Activated CD4-positive, alpha-beta memory T cell treated with anti-CD3 and anti-CD28 coated beads, Interleukin-2, amount 10 ng/mL, durations not matched to agents 7 days and 5 days (primary cell): ENCODE measurements at regions of chr19 and their contacts with region 1.

Region 1: DNA sequence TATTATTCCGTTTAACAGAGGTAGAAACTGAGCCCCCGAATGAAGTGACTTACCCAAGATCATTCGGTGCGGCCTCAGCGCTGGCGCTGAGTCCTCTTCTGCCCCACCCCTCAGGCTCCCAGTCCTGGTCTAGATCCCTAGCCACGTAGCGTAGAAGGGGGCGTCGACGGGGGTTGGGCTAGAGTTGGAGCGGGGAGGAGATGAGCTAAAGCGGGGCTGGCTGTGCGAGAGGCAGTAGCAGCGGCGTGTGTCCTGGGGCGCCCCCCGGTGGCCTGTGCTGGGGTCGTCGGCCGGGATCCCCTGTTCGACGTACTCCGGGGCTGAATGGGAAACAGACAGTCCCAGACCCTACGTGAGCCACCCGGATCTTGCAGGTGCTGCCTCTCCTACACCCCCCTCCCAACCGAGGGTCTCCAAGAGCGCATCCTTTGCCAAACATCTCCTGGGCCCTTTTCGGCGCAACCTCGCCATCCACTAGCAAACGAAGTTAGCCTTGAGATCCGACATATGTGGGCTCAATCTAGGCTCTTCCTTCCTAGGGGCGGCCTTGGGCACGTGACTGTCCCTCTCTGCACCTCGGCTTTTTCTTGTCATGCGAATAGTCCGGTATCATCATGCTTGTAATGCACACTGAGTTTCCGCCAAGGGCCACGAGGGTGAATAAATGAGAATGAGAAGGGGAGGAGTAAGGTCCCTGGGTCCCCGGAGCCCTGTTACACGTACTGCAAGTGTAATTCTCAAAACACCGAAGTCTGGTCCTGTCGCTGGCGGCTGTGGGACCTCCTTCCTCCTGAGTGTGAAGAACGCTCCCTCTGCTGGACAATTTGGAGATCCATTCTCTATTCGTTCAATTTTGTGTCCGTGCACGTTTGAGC is 47.7 kb downstream of the CYP4F22 start:
- DNase-seq: peak; percentile 97
- H3K4me3 Mint-ChIP-seq: peak overlapping the region; percentile 85
- H3K27ac Mint-ChIP-seq: peak overlapping the region; percentile 76
- H3K4me1 Mint-ChIP-seq: peaks cover 29% of the 10 kb centered on the region
- H3K27me3 Mint-ChIP-seq: peaks cover 9% of the 10 kb centered on the region

Region 2: DNA sequence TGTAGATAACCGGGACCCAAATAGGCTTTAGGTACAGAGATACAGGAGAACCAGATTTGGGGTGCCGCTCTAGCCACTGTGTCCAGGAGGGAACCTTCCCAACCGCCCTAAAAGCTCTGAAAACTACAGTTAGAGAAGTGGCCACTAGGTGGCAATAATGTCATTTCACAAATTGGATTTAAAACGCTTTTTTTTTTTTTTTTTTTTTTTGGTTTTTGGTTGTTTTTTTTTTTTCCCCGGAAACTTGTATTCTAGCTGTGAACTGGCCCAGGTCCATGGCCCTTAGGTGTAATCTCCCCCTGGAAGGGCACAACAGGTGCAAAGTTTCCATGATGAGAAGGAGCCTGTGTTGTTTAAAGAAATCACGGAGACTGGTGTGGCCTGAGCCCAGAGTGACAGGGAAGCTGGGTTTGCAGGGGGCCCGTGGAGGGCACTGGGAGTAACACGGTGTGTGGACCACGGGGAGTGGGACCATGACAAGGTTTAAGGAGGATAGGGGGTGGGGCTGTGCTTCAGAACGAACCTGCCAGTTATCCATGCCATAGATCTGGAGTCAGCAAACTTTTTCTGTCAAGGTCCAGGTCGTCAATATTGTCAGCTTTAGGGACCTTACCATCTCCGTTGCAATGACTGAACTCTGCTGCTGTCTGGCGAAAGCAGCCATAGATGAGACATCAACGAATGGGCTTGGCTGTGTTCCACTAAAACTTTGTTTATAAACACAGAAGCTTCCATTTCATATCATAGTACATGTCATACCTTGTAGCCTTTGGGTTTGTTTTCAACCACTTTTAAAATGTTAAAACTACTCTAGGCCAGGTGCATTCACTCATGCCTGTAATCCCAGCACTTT is 463.9 kb before region 1 on chr19:
- CTCF ChIA-PET with region 1: interaction called, 12 read pairs
- POLR2A ChIA-PET with region 1: no interaction called
- DNase-seq: peak; percentile 37
- H3K4me3 Mint-ChIP-seq: no peak overlapping the region
- H3K27ac Mint-ChIP-seq: no peak overlapping the region
- H3K4me1 Mint-ChIP-seq: peaks cover 4% of the 10 kb centered on the region
- H3K27me3 Mint-ChIP-seq: peaks cover 3% of the 10 kb centered on the region

Region 3: DNA sequence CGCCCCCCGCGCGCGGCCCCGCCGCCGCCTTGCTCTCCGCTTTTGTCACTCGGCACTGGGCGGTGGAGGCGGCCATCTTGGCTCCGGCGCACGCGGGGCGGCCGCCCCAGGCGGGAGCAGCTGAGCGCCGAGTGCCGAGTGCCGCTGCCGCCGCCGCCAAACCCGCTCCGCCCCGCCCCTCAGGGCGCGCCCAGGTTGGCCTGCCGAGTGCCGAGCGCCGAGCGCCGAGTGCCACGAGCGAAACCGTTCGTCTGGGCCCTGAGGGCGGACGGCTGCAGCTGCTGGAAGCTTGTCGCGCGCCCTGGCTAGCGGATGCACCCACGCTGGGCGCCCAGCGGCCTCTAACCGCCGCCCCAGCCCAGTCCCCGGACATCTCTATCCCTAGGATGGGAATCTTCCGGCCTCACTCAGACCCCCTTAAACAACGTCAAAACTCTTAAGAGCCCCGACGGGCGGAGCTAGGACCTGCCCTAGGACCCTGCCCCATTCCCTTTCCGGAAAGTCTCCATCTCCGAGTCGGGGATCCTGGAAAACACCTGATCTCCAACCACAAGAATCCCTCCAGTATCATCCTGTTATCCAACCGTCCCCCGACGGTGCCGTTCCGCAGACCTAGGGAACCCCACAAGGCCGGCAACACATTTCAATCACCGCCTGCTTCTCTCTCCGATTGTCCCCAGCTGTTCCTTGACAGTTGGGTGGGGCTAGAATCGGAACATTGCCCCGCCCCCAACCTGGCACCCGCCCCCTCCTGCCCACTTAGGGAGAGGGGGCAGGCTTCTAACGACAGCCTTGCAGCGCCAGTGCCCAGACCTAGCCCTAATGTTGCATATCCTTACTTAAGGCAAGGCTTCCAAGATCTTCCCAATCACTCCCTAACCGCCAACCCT is 123.1 kb before region 1 on chr19:
- CTCF ChIA-PET with region 1: interaction called, 15 read pairs
- POLR2A ChIA-PET with region 1: interaction called, 7 read pairs
- DNase-seq: peak; percentile 95
- H3K4me3 Mint-ChIP-seq: peak overlapping the region; percentile 93
- H3K27ac Mint-ChIP-seq: peak overlapping the region; percentile 94
- H3K4me1 Mint-ChIP-seq: peaks cover 36% of the 10 kb centered on the region
- H3K27me3 Mint-ChIP-seq: no peaks in the 10 kb centered on the region

Region 4: DNA sequence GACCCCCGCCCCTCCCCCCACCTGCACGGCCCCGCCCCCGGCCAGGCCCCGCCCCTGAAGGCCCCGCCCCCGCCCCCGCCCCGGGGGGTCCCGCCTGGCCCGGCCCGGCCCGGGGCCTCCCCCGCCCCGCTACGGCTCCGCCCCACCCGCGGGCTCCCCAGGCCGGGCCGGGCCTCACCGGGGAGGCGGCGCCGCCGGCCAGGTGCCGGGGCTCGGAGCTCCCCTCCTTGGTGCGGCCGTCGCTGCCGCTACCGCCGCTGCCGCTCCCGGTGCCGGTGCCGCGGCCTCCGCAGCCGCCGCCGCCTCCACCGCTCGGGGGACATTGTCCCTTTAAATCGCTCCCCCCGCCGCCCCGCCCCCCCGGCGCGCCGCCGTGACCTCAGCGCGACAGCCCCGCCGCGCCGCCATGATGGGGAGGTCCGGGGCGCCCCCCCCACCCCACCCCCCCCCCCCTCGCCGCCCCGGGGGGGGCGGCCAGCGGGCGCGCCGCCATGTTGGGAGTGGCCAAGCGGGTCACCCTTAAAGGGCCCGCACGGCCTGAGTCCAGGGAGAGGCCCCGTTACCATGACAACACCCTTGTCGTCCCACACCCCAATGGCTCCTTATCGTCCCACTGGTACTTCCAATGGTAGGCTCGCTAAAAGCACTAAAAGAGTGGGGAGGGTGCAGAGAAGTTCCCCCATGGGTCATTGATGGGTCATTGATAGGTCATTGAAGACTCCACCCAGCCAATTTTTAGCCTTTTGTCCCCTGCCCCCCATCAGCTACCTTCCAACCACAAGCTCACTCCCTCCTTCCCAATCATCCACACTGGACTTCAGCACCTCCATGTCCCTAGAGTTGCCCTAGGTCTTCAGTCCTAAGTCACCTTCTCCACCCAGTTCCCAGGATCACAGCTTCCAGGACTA is 106.1 kb before region 1 on chr19 and contains the start of gene WIZ:
- CTCF ChIA-PET with region 1: interaction called, 10 read pairs
- POLR2A ChIA-PET with region 1: interaction called, 7 read pairs
- DNase-seq: peak; percentile 84
- H3K4me3 Mint-ChIP-seq: peak within 1 kb of the TSS; percentile 70
- H3K27ac Mint-ChIP-seq: peak within 1 kb of the TSS; percentile 81
- H3K4me1 Mint-ChIP-seq: peaks cover 29% of the 10 kb centered on the region
- H3K27me3 Mint-ChIP-seq: no peaks in the 10 kb centered on the region
- total RNA-seq, gene WIZ: 25.3 to 25.4 TPM

Region 5: DNA sequence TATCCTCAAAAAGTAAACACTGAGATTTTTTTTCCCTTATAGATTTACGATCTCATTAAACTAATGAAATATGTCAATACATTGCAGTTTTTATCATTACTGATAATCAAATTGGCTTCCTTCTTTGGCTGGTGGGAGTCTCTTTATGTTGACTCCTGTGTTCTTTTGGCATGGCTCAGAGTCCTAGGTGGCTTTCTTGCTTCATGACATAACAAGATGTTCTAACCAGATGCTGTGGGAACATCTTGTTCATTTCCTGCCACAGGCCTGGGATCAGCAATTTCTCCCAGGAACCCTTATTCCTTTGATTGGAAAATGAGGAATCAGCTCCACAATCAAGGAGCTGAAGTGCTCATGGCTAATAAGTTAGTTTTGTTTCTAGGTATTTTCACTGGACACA is 60.8 kb before region 1 on chr19:
- CTCF ChIA-PET with region 1: no interaction called
- POLR2A ChIA-PET with region 1: no interaction called
- DNase-seq: no peak
- H3K4me3 Mint-ChIP-seq: no peak overlapping the region
- H3K27ac Mint-ChIP-seq: no peak overlapping the region
- H3K4me1 Mint-ChIP-seq: peaks cover 2% of the 10 kb centered on the region
- H3K27me3 Mint-ChIP-seq: peaks cover 15% of the 10 kb centered on the region

Region 6: DNA sequence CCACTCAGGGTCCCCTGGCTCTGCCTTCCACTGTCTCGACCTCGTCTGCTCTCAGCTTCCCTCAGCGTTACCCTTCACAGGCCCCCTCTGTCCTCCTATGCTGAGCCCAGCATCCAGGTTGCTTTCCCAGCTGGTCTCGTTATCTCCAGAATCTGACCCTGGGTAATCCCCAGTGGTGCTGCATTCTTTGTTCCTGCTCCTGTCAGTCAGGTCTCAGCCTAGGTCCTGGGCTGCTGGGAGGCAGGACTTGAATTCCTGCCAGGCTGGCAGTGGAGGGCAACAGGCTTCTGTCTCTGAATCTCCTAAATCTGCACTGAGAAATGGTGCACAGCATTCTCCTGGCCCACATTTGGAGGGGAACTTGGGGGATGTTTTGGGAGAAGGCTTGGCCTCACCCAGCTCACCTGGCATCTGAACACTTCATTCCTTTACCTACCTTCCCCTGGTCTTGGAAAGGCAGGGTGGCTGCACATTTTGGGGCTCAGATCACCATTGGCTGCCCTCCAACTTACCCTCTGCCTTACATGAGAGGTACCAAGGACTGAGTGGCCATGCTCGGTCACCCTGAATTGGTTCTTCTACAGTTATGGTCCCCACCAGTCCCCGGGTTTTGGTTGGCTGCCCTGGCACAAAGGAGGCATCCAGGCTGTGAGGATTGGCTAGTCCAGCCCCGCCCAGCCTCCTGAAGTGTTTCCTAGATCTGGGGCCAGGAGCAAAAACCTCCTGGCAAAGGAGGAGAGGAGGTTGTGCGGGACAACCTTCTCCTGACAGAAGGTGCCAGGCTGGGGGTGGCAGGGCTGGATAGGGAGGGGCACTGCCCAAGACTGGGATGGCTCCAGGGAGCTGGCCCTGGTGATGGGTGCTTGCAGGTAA is 58.7 kb after region 1 on chr19 and contains the start of gene CYP4F8:
- CTCF ChIA-PET with region 1: no interaction called
- POLR2A ChIA-PET with region 1: no interaction called
- DNase-seq: no peak
- H3K4me3 Mint-ChIP-seq: no peak within 1 kb of the TSS
- H3K27ac Mint-ChIP-seq: no peak within 1 kb of the TSS
- H3K4me1 Mint-ChIP-seq: no peaks in the 10 kb centered on the region
- H3K27me3 Mint-ChIP-seq: peaks cover 2% of the 10 kb centered on the region
- total RNA-seq, gene CYP4F8: not detected